ENCODE measurements at regions of chr6 and their contacts with region 1.

Region 1: GRCh38 chr6:20366091-20366832 is 35.4 kb upstream of the E2F3 start:
- DNase-seq: peak; percentile 49
- H3K4me3 Mint-ChIP-seq: peak overlapping the region; percentile 63
- H3K27ac Mint-ChIP-seq: peak overlapping the region; percentile 98
- H3K4me1 Mint-ChIP-seq: peaks cover 58% of the 10 kb centered on the region
- H3K27me3 Mint-ChIP-seq: no peaks in the 10 kb centered on the region

Region 2: DNA sequence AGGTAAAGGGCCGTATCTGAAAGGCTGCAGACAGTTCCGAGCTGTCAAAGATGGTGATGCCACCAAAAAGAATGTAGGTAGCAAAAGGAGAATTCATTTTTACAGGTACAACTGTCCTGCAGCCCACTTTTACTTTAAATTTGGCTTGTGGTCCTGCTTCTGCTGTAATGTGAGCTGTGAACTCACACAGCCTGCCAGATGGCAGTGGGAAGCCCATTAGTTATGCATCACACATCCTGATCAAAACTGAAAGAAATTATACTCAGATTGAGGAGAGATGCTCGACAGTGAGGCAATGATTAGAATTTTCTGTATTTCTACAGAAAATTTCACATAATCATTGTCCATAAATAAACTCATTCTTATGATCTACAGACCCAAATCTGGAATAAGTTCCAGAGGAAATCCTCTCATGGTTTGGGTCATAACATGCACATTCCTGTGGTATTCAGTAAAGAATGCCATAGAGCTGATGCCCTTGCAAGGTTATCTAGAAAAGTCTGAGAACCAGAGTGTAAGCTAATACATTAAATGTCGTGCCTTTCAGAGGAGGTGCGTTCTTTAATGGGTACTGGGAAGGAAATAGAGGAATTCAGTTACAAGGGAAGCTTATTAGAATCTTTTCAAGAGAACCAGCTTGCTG is 11.5 kb after region 1 on chr6:
- CTCF ChIA-PET with region 1: interaction called, 7 read pairs
- POLR2A ChIA-PET with region 1: interaction called, 39 read pairs
- DNase-seq: no peak
- H3K4me3 Mint-ChIP-seq: no peak overlapping the region
- H3K27ac Mint-ChIP-seq: no peak overlapping the region
- H3K4me1 Mint-ChIP-seq: peaks cover 24% of the 10 kb centered on the region
- H3K27me3 Mint-ChIP-seq: no peaks in the 10 kb centered on the region

Measured in activated CD4-positive, alpha-beta memory T cell treated with anti-CD3 and anti-CD28 coated beads, Interleukin-2, amount 10 ng/mL, durations not matched to agents 7 days and 5 days (primary cell).